HEK293 (cell line): ENCODE measurements at regions of chr17 and their contacts with region 1.

Region 1: DNA sequence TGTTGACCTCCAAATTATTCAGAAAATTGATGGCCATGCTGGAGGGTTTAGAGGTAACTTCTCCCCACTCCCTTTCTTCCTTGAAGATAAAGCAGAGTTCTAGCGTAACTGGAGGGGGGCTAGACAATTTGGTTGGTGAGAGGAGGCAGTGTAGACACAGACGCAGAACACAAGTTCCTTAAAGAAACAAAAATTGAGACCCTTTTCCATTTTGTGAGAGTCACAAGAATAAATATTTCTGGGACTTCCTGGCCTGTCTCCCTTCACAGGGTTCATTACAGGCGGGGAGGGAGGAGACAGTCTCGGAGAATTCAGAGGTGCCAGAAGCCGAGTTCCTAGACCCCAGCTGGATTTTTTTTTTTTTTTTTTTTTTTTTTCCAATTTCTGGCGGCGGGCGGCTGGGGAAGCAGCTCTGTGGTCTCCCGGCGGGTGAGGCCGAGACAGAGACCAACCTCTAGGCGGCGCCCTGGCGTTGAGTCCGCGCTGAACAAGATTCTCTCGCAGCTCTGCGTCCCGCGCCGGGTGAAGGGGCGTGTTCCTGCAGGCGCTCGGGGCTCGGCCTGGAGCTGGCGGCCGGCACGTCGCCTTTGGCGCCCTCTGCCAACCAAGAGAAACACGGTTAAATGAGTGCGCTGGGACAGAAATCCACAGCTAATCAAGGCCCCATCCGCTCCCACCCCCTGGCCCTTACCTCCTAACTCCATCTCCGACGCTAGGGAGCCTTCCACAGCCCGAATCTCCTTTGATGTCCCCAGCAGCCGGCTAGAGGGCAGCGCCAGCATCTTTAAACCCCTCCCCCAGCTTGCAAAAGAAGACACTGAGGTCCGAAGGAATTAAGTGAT is 10.2 kb upstream of the HOXB9 start:
- H3K4me3 ChIP-seq: no peak overlapping the region
- H3K27ac ChIP-seq: peak overlapping the region; percentile 49
- H3K4me1 ChIP-seq: no peaks in the 10 kb centered on the region
- CTCF ChIP-seq: peak; percentile 49; the same call in 1 of the 2 replicates

Region 2: GRCh38 chr17:48646183-48647102 is 10.0 kb after region 1 on chr17:
- CTCF ChIA-PET with region 1: interaction called, 16 read pairs
- POLR2A ChIA-PET with region 1: interaction called, 23 read pairs
- H3K4me3 ChIP-seq: peak overlapping the region; percentile 80
- H3K27ac ChIP-seq: peak overlapping the region; percentile 93
- H3K4me1 ChIP-seq: peaks cover 6% of the 10 kb centered on the region
- CTCF ChIP-seq: peak; percentile 9; the same call in 1 of the 2 replicates

Region 3: DNA sequence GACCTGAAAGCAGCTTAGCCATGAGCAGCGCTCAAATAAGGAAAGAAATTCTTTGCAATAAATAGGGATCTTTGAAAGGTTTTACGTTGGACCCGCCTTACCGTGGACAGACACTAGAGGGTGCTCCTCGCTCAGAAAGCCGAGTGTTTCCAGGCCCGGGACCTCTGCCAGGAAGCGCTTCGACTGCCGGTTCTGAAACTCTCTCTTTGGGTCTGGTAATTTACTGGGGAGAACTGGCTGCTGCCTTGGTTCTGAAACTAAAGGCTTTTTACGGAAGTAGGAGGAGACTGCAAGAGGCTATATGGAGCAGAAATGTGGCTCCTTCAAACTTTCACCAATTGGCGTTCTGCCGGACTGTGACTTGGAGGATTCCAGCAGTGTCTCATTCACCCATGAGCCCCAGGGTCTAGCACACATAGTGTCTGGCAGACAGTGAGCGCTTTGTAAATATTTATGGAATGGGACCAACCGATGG is 35.3 kb after region 1 on chr17:
- CTCF ChIA-PET with region 1: interaction called, 13 read pairs
- POLR2A ChIA-PET with region 1: no interaction called
- H3K4me3 ChIP-seq: peak overlapping the region; percentile 8
- H3K27ac ChIP-seq: no peak overlapping the region
- H3K4me1 ChIP-seq: no peaks in the 10 kb centered on the region
- CTCF ChIP-seq: peak; percentile 71